Transverse colon (tissue), 4 donors: ENCODE measurements at regions of chr3 and their contacts with region 1.

Region 1: GRCh38 chr3:193982258-193982659 is 153.7 kb upstream of the HES1 start:
- DNase-seq: peak; percentile 89
- H3K4me3 ChIP-seq: no peak overlapping the region
- H3K27ac ChIP-seq: peak overlapping the region in 2 of 4 donors; percentile 11 to 60
- H3K4me1 ChIP-seq: peaks cover 0 to 23% (median 15%) of the 10 kb centered on the region in 4 donors
- H3K27me3 ChIP-seq: no peaks in the 10 kb centered on the region
- CTCF ChIP-seq: no peak
- EP300 ChIP-seq: no peak
- POLR2A ChIP-seq: no peak

Region 2: DNA sequence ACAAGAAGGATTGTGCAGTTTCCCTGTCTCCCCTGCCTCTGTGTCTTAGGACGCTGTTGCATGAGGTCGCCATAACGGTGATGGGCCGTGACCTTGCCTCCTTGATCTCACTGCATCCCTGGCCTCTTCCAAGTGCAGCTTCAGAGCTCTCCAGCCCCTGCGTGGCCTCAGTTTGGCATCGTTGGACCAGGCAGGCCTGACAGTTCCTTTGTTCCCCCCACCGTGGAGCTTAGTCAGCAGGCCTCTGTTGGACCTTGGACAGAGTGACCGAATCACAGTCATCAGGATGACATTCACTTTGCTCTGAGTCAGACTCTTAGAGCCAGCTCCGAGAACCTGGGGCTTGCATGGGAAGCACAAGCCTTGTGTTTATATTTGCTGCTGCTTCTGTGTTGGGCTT is 249.9 kb before region 1 on chr3:
- in situ Hi-C with region 1: no loop called
- intact Hi-C with region 1: no loop called
- DNase-seq: no peak
- H3K4me3 ChIP-seq: no peak overlapping the region
- H3K27ac ChIP-seq: no peak overlapping the region
- H3K4me1 ChIP-seq: no peaks in the 10 kb centered on the region
- H3K27me3 ChIP-seq: no peaks in the 10 kb centered on the region
- CTCF ChIP-seq: no peak
- EP300 ChIP-seq: no peak
- POLR2A ChIP-seq: no peak

Region 3: GRCh38 chr3:193788189-193788991 is 193.9 kb before region 1 on chr3:
- in situ Hi-C with region 1: loop called in 1 of 4 experiments (anchors 25 kb)
- intact Hi-C with region 1: no loop called
- DNase-seq: peak; percentile 54
- H3K4me3 ChIP-seq: no peak overlapping the region
- H3K27ac ChIP-seq: peak overlapping the region in 3 of 4 donors; percentile 18 to 44 (median 25)
- H3K4me1 ChIP-seq: peaks cover 0 to 23% (median 13%) of the 10 kb centered on the region in 4 donors
- H3K27me3 ChIP-seq: no peaks in the 10 kb centered on the region
- CTCF ChIP-seq: peak; percentile 69 to 86 (median 75)
- EP300 ChIP-seq: no peak
- POLR2A ChIP-seq: no peak

Region 4: DNA sequence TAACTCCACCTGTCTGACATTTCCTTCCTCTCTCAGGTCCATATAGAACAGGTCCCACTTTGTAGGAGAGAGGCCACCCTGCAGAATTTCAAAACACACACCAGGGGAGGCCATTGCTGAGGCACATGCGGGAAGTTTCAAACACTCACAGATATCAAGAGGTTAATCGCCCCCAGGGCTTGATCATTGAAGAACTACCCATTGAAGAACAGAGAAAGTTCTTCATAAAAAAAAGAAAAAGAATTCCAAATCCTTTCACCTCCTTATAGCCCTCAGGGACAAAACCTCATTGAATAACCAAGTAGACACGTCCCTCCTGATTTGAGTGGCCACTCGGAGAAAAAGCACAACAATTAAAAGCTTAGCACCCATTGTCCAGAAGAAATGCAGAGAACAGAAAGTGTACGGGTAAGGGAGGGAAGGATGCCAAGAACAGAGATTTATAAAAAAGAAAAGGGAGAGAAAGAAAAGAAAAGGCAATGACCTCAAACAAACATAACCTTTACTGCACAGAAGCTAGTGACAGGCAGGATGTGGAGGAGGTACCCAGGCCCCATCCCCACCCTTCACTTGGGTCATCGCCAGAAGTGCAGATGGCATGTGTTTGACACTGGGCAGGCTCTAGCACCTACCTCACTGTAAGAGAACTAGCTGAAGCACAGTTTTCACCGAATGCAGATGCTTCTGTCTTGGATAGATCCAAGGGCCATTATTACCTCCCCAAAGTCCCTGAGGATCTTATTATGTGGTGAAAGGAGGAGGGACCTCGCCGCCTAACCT is 41.4 kb after region 1 on chr3:
- in situ Hi-C with region 1: no loop called
- intact Hi-C with region 1: no loop called
- DNase-seq: no peak
- H3K4me3 ChIP-seq: no peak overlapping the region
- H3K27ac ChIP-seq: no peak overlapping the region
- H3K4me1 ChIP-seq: peaks cover 0 to 6% (median 0%) of the 10 kb centered on the region in 4 donors
- H3K27me3 ChIP-seq: no peaks in the 10 kb centered on the region
- CTCF ChIP-seq: no peak
- EP300 ChIP-seq: no peak
- POLR2A ChIP-seq: no peak